ENCODE measurements at regions of chr13 and their contacts with region 1.

Region 1: DNA sequence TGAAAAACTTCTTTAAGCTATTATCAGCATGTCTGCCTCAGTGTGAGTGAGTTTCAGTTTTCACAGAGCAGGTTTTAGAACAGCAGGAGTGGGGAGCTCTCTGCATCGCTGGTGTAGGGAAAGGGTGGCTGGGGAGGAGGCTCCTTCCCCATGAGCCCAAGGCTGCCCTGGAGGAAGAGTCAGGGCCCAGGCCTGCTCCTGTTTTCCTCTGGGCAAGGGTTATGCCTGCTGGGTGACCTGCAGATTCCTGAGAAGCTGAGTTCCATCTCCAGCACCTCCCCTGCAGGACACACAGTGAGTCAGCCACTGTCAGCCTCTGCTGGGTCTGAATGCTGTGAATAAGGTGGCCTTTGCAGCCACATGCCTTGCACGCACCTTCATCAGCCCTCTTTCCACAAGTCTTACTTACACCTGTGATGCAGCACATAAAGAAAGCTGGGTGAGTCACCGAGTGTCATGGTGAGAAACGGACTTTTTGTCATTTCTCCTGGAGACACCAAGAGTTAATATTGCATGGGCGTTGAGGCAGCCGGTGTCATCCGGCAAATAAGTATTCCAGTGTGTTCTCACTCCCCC is 186.5 kb upstream of the KL start:
- DNase-seq: no peak
- ATAC-seq: peak; percentile 59
- H3K4me3 ChIP-seq: no peak overlapping the region
- H3K27ac ChIP-seq: no peak overlapping the region
- H3K4me1 ChIP-seq: no peaks in the 10 kb centered on the region
- H3K27me3 ChIP-seq: peaks cover 3 to 5% of the 10 kb centered on the region in 2 experiments; a peak in 1 of 5 replicates
- CTCF ChIP-seq: no peak
- EP300 ChIP-seq: no peak
- POLR2A ChIP-seq: no peak
- RAD21 ChIP-seq: no peak

Region 2: GRCh38 chr13:32629313-32629712 is 200.5 kb before region 1 on chr13:
- CTCF ChIA-PET with region 1: no interaction called
- POLR2A ChIA-PET with region 1: no interaction called
- in situ Hi-C with region 1: no loop called
- intact Hi-C with region 1: no loop called
- DNase-seq: no peak
- ATAC-seq: no peak
- H3K4me3 ChIP-seq: no peak overlapping the region
- H3K27ac ChIP-seq: no peak overlapping the region
- H3K4me1 ChIP-seq: peaks cover 0 to 3% of the 10 kb centered on the region in 2 experiments; a peak in 3 of 5 replicates
- H3K27me3 ChIP-seq: no peaks in the 10 kb centered on the region
- CTCF ChIP-seq: no peak
- EP300 ChIP-seq: no peak
- POLR2A ChIP-seq: no peak
- RAD21 ChIP-seq: no peak

Region 3: DNA sequence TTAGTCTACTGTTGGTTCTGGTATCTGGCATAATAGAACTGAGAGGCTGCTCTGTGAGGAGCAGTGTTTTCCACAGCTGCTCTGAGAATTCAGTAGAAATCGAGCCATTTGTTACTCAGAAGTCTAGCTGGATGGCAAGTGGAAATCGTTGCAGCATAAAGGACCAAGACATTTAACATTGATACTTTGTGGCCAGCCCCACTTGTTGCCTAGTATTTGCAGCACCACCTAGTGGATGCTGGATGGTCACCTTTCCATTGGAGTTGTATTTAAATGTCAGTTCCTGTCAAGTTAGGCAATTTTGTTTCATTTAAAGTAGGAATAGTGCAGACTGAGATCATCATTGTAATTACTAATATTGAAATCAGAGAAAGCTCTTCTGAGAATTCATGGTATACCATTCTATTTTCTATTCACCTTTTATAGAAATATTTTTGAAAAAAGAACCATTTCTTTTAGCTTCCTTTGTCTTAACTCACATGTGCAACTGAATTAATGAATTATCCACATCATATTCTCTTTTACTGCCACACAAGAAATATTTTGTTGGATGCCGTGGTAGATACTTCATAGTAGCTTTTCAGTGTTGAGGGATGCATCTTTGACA is 179.0 kb before region 1 on chr13:
- CTCF ChIA-PET with region 1: no interaction called
- POLR2A ChIA-PET with region 1: no interaction called
- in situ Hi-C with region 1: no loop called
- intact Hi-C with region 1: no loop called
- DNase-seq: peak; percentile 21 to 68 (median 34)
- ATAC-seq: peak; percentile 87
- H3K4me3 ChIP-seq: no peak overlapping the region
- H3K27ac ChIP-seq: no peak overlapping the region
- H3K4me1 ChIP-seq: no peaks in the 10 kb centered on the region
- H3K27me3 ChIP-seq: no peaks in the 10 kb centered on the region
- CTCF ChIP-seq: peak; percentile 62 to 70 (median 68)
- EP300 ChIP-seq: no peak
- POLR2A ChIP-seq: no peak
- RAD21 ChIP-seq: peak; percentile 24 to 49

Region 4: DNA sequence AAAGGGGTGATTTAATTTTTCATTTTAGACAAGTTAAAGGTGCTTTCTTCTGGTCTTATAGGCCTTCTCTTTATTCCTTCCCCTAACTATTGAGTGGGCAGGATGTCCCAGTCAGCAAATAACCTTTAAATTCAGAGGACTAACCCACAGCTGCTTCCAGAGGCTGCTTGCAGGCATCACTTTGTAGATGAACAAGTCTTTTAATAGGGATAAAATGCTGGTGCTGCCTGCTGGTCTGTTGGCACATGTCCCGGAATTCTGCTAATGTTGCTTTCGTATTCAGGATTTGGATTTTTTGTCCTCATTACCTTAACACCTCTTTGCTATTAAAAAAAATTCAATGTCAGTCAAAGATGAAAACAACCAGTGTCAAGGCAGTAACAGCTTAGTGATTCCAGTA is 53.7 kb after region 1 on chr13:
- CTCF ChIA-PET with region 1: no interaction called
- POLR2A ChIA-PET with region 1: no interaction called
- in situ Hi-C with region 1: no loop called
- intact Hi-C with region 1: loop called (anchors 2 kb)
- DNase-seq: no peak
- ATAC-seq: no peak
- H3K4me3 ChIP-seq: no peak overlapping the region
- H3K27ac ChIP-seq: no peak overlapping the region
- H3K4me1 ChIP-seq: no peaks in the 10 kb centered on the region
- H3K27me3 ChIP-seq: no peaks in the 10 kb centered on the region
- CTCF ChIP-seq: no peak
- EP300 ChIP-seq: no peak
- POLR2A ChIP-seq: no peak
- RAD21 ChIP-seq: no peak

Measured in K562 (cell line).